ENCODE measurements at regions of chr2 and their contacts with region 1.

Region 1: GRCh38 chr2:119476301-119477021 is 44.8 kb downstream of the TMEM37 start:
- DNase-seq: peak; percentile 67 to 77 (median 72)
- ATAC-seq: peak; percentile 93 to 97 (median 96)
- H3K4me3 ChIP-seq: peak overlapping the region in 1 of 3 donors; percentile 4
- H3K27ac ChIP-seq: no peak overlapping the region
- H3K4me1 ChIP-seq: peaks cover 0 to 4% (median 0%) of the 10 kb centered on the region in 4 donors
- H3K27me3 ChIP-seq: no peaks in the 10 kb centered on the region
- CTCF ChIP-seq: peak; percentile 95 to 98 (median 96)
- POLR2A ChIP-seq: no peak

Region 2: GRCh38 chr2:119366649-119367471 is 109.6 kb before region 1 on chr2 and contains the starts of genes C2orf76 and DBI:
- intact Hi-C with region 1: no loop called
- DNase-seq: peak; percentile 96 to 98 (median 98)
- ATAC-seq: peak; percentile 91 to 96 (median 93)
- H3K4me3 ChIP-seq: peak within 1 kb of the TSS; percentile 68 to 97 (median 90)
- H3K27ac ChIP-seq: peak within 1 kb of the TSS; percentile 90 to 95 (median 93)
- H3K4me1 ChIP-seq: peaks cover 0 to 52% (median 7%) of the 10 kb centered on the region in 4 donors
- H3K27me3 ChIP-seq: no peaks in the 10 kb centered on the region
- CTCF ChIP-seq: no peak
- POLR2A ChIP-seq: peak; percentile 95
- total RNA-seq, gene C2orf76: 2.6 to 5.5 (median 3.5) TPM
- total RNA-seq, gene DBI: 132 to 314 (median 191) TPM

Region 3: DNA sequence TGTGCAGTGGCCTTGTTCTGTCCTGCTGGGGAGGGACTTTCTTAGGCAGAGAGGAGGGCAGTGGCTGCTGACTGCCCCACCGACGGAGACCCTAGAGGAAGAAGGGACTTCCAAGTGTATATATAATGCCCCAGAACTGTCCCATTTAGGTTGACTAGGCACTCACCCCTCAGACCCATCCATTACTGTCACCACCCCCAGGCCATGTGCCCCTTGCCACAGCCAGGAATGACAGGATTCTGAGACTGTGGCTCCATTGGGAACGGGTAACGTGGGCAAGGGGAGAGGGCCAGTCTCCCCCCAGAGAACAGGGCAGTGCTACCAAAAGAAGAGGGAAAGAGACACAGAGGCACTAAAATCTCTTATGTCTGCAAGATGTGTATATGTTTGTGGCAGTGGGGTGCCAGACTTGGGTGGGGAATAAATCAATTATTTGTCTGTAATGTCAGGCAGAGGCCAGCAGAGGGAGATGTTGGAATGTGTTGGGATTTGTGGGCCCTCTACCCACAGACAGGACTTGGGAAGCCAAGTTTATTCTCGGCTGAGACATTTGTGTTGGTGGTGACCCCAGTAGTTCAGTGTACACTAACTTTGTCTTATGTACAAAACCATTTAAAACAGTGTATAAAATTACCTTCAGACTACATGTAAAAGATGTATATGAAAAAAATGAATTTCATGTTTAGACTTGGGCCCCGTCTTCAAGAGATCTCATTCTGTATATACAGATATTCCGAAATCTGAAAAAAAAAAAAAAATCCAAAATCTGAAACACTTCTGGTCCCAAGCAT is 68.8 kb before region 1 on chr2:
- intact Hi-C with region 1: loop called (anchors 5 kb)
- DNase-seq: peak in 1 of 3 donors; percentile 64
- ATAC-seq: peak; percentile 89 to 91 (median 91)
- H3K4me3 ChIP-seq: no peak overlapping the region
- H3K27ac ChIP-seq: peak overlapping the region in 1 of 3 donors; percentile 48
- H3K4me1 ChIP-seq: peaks cover 0 to 25% (median 2%) of the 10 kb centered on the region in 4 donors
- H3K27me3 ChIP-seq: no peaks in the 10 kb centered on the region
- CTCF ChIP-seq: peak; percentile 71 to 90 (median 78)
- POLR2A ChIP-seq: no peak

Measured in right lobe of liver (tissue), 6 donors.